CD4-positive, alpha-beta T cell (primary cell): ENCODE measurements at regions of chrX and their contacts with region 1.

Region 1: DNA sequence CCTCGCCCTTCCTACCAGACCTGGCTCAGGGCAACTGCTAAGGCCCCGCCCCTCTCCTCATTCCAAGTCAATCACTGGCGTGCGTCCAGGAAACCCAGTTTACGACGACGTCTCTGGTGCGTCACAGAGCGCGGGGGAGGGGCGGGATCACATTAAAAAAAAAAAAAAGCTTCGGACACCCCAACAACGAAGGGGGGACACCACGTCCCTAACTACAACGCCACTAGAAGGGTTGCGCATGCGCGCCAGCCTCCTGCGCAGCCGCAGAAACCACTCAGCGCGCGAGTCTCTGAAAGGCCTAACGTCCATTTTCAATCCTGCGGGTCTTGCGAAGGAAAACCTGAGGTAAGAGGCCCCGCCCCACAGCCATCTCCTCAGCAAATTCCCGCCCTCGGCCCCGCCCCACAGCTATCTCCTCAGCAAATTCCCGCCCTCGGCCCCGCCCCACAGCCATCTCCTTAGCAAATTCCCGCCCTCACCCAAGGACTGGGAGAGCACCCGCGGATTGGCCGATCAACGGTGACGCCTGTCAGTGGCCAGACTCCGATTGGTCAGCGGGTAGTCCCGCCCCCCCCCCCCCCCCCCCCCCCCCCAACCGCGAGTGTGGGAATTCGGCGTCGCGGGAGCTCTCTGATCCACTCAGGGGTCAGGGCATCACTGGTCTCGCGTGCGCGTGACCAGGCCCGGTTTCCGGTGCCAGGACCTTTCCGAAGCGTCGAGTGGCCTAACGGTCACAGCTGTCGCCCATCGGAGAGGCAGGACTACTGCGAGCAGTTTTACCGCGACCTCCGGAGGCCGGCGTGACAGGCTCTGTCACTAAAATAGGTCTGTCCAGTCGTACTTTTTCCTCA is at the start of gene SCML1:
- DNase-seq: peak; percentile 76 to 94 (median 86)
- ATAC-seq: peak; percentile 70
- H3K4me3 ChIP-seq: peak within 1 kb of the TSS; percentile 69
- H3K4me3 Mint-ChIP-seq: peak within 1 kb of the TSS; percentile 92
- H3K27ac ChIP-seq: peak within 1 kb of the TSS; percentile 81 to 96
- H3K27ac Mint-ChIP-seq: peak within 1 kb of the TSS; percentile 89
- H3K4me1 ChIP-seq: peaks cover 11% of the 10 kb centered on the region
- H3K4me1 Mint-ChIP-seq: peaks cover 43% of the 10 kb centered on the region
- H3K27me3 ChIP-seq: peaks cover 0 to 2% of the 10 kb centered on the region in 2 experiments
- H3K27me3 Mint-ChIP-seq: no peaks in the 10 kb centered on the region
- CTCF ChIP-seq: no peak
- total RNA-seq, gene SCML1: 59.1 to 60.3 TPM

Region 2: GRCh38 chrX:16882702-16883486 is 854.2 kb before region 1 on chrX:
- CTCF ChIA-PET with region 1: no interaction called
- POLR2A ChIA-PET with region 1: no interaction called
- intact Hi-C with region 1: loop called in 1 of 2 experiments (anchors 5 kb)
- DNase-seq: peak; percentile 38 to 79 (median 62)
- ATAC-seq: peak; percentile 84
- H3K4me3 ChIP-seq: peak overlapping the region; percentile 63
- H3K4me3 Mint-ChIP-seq: peak overlapping the region; percentile 87
- H3K27ac ChIP-seq: peak overlapping the region in 1 of 2 donors; percentile 50
- H3K27ac Mint-ChIP-seq: peak overlapping the region; percentile 81
- H3K4me1 ChIP-seq: peaks cover 12% of the 10 kb centered on the region
- H3K4me1 Mint-ChIP-seq: peaks cover 4% of the 10 kb centered on the region
- H3K27me3 ChIP-seq: peaks cover 0 to 4% of the 10 kb centered on the region in 2 experiments
- H3K27me3 Mint-ChIP-seq: no peaks in the 10 kb centered on the region
- CTCF ChIP-seq: peak; percentile 70

Region 3: DNA sequence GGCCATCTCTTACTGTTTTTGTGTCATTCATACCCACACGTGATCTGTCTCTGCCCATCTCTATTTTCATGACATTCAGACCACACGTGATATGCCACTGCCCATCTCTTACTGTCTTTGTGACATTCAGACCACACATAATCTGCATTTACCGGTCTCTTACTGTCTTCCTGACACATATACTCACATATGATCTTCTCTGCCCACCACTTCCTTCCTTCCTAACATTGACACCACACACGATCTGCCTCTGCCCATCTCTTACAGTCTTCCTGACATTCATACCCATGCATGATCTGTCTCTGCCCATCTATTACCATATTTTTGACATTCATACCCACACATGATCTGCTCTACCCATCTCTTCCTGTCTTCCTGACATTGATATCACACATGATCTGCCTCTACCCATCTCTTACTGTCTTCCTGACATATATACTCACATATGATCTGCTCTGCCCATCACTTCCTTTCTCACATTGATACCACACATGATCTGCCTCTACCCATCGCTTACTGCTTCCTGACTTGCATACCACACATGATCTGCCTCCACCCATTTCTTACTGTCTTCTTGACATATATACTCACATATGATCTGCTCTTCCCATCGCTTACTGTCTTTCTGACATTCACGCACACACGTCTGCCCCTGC is 36.3 kb after region 1 on chrX:
- CTCF ChIA-PET with region 1: no interaction called
- POLR2A ChIA-PET with region 1: no interaction called
- intact Hi-C with region 1: loop called in 1 of 2 experiments (anchors 2 kb)
- DNase-seq: no peak
- ATAC-seq: peak; percentile 64
- H3K4me3 ChIP-seq: no peak overlapping the region
- H3K4me3 Mint-ChIP-seq: no peak overlapping the region
- H3K27ac ChIP-seq: no peak overlapping the region
- H3K27ac Mint-ChIP-seq: no peak overlapping the region
- H3K4me1 ChIP-seq: peaks cover 30% of the 10 kb centered on the region
- H3K4me1 Mint-ChIP-seq: peaks cover 15% of the 10 kb centered on the region
- H3K27me3 ChIP-seq: no peaks in the 10 kb centered on the region
- H3K27me3 Mint-ChIP-seq: no peaks in the 10 kb centered on the region
- CTCF ChIP-seq: no peak

Region 4: DNA sequence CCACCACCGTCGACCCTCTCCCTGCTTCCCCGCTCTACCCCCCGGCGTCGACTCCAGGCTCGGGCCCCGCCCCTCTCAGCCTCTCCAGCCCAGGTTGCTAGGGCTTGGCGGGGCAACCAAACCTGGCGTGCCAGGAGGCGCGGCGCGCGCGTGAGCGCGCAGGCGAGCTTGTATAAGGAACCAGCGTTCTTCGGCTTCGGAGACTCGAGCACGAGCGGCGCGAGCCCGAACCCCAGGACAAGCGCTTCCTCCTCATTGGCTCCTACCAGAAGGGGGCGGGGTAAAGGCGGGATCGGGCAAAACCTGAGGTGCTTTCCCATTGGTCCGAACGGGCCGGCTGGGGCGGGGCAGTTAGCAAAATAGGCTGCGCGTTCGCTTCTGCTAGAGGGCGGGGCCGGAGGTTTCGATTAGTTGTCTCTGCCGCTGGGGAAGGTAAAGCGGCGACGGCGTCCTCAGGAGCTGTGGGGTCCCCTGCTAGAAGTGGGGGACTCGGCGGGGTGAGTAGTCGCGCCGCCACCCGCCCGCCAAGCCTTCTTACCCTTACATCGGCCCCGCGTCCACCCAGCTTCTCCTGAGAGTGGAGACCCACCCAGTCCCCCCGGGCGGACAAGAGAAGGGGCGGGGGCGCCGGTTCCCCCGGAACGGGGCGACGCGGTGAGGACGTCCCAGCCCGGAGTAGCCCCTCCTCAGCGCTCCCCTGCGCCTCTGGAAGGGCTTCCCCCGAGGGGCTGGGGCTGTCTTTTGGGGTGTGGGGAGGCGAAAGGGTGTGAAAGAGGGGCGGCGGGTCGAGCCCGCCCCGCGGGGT is 688.3 kb after region 1 on chrX and contains the start of gene CDKL5:
- CTCF ChIA-PET with region 1: no interaction called
- POLR2A ChIA-PET with region 1: interaction called, 5 read pairs
- intact Hi-C with region 1: loop called in 1 of 2 experiments (anchors 2 kb)
- DNase-seq: peak; percentile 91 to 98 (median 94)
- ATAC-seq: peak; percentile 89
- H3K4me3 ChIP-seq: peak within 1 kb of the TSS; percentile 86
- H3K4me3 Mint-ChIP-seq: peak within 1 kb of the TSS; percentile 99
- H3K27ac ChIP-seq: peak within 1 kb of the TSS; percentile 74 to 81
- H3K27ac Mint-ChIP-seq: peak within 1 kb of the TSS; percentile 89
- H3K4me1 ChIP-seq: no peaks in the 10 kb centered on the region
- H3K4me1 Mint-ChIP-seq: peaks cover 18% of the 10 kb centered on the region
- H3K27me3 ChIP-seq: no peaks in the 10 kb centered on the region
- H3K27me3 Mint-ChIP-seq: no peaks in the 10 kb centered on the region
- CTCF ChIP-seq: no peak
- total RNA-seq, gene CDKL5: 2.2 to 2.4 TPM

Region 5: GRCh38 chrX:18984381-18985185 is 1247.5 kb after region 1 on chrX:
- CTCF ChIA-PET with region 1: no interaction called
- POLR2A ChIA-PET with region 1: no interaction called
- intact Hi-C with region 1: loop called in 1 of 2 experiments (anchors 10 kb)
- DNase-seq: peak; percentile 78 to 92 (median 84)
- ATAC-seq: peak; percentile 85
- H3K4me3 ChIP-seq: peak overlapping the region; percentile 78
- H3K4me3 Mint-ChIP-seq: peak overlapping the region; percentile 92
- H3K27ac ChIP-seq: peak overlapping the region; percentile 83 to 94
- H3K27ac Mint-ChIP-seq: peak overlapping the region; percentile 91
- H3K4me1 ChIP-seq: peaks cover 19% of the 10 kb centered on the region
- H3K4me1 Mint-ChIP-seq: peaks cover 21% of the 10 kb centered on the region
- H3K27me3 ChIP-seq: no peaks in the 10 kb centered on the region
- H3K27me3 Mint-ChIP-seq: no peaks in the 10 kb centered on the region
- CTCF ChIP-seq: peak; percentile 26

Region 6: DNA sequence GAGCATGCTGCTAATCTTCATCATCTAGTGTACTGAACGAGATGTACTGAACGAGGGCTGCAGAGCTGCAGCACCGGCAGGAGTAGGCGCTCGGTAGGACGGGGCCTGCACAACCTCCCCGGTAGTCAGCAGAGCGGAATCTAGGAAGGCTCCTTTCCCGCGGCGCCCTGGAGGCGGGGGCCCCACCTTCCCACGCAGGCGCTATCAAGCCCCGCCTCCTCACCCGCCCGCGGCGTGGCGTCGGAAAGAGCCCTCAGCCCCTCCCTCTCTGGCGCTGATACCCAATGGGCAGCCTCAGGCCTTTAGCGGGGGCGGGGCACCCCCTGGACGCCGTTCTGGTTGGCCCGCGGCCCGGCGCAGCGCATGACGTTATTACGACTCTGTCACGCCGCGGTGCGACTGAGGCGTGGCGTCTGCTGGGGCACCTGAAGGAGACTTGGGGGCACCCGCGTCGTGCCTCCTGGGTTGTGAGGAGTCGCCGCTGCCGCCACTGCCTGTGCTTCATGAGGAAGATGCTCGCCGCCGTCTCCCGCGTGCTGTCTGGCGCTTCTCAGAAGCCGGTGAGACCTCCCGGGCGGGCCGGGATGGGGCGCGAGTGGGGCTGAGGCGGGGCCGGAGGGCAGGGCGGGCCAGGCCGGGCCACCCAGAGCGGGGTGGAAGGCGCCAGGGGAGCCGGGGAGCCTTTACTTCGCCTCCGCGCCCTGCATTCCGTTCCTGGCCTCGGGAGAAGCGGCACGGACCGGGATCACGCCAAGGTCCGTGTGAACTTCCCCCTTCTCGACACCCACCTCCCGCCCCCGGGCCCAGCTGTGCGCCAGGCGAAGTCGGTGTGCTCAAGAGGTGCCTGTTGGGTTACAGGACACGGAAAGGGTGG is 1606.7 kb after region 1 on chrX and contains the start of gene PDHA1:
- CTCF ChIA-PET with region 1: no interaction called
- POLR2A ChIA-PET with region 1: no interaction called
- intact Hi-C with region 1: loop called (anchors 5 to 10 kb)
- DNase-seq: peak; percentile 82 to 96 (median 90)
- ATAC-seq: peak; percentile 96
- H3K4me3 ChIP-seq: peak within 1 kb of the TSS; percentile 74
- H3K4me3 Mint-ChIP-seq: peak within 1 kb of the TSS; percentile 90
- H3K27ac ChIP-seq: peak within 1 kb of the TSS; percentile 56 to 60
- H3K27ac Mint-ChIP-seq: peak within 1 kb of the TSS; percentile 90
- H3K4me1 ChIP-seq: peaks cover 27% of the 10 kb centered on the region
- H3K4me1 Mint-ChIP-seq: peaks cover 19% of the 10 kb centered on the region
- H3K27me3 ChIP-seq: no peaks in the 10 kb centered on the region
- H3K27me3 Mint-ChIP-seq: no peaks in the 10 kb centered on the region
- CTCF ChIP-seq: no peak
- total RNA-seq, gene PDHA1: 95.8 to 99.0 TPM